IMR-90 (cell line): ENCODE measurements at regions of chr11 and their contacts with region 1.

Region 1: GRCh38 chr11:58254936-58255335 is 13.1 kb downstream of the OR10W1 start:
- DNase-seq: peak; percentile 18
- ATAC-seq: no peak; the same call in 1 of the 2 replicates
- H3K4me3 ChIP-seq: no peak overlapping the region
- H3K27ac ChIP-seq: no peak overlapping the region
- H3K4me1 ChIP-seq: no peaks in the 10 kb centered on the region
- H3K27me3 ChIP-seq: no peaks in the 10 kb centered on the region
- CTCF ChIP-seq: no peak
- POLR2A ChIP-seq: no peak
- RAD21 ChIP-seq: no peak

Region 2: GRCh38 chr11:57964660-57965059 is 290.3 kb before region 1 on chr11:
- CTCF ChIA-PET with region 1: no interaction called
- POLR2A ChIA-PET with region 1: no interaction called
- dilution Hi-C with region 1: no loop called
- in situ Hi-C with region 1: no loop called
- intact Hi-C with region 1: no loop called
- DNase-seq: no peak
- ATAC-seq: no peak
- H3K4me3 ChIP-seq: no peak overlapping the region
- H3K27ac ChIP-seq: no peak overlapping the region
- H3K4me1 ChIP-seq: no peaks in the 10 kb centered on the region
- H3K27me3 ChIP-seq: peaks cover 14% of the 10 kb centered on the region
- CTCF ChIP-seq: no peak
- POLR2A ChIP-seq: no peak
- RAD21 ChIP-seq: no peak

Region 3: GRCh38 chr11:58222721-58223120 is 32.2 kb before region 1 on chr11:
- CTCF ChIA-PET with region 1: no interaction called
- POLR2A ChIA-PET with region 1: interaction called, 13 read pairs
- dilution Hi-C with region 1: no loop called
- in situ Hi-C with region 1: no loop called
- intact Hi-C with region 1: no loop called
- DNase-seq: peak; percentile 41
- ATAC-seq: peak; percentile 42
- H3K4me3 ChIP-seq: no peak overlapping the region
- H3K27ac ChIP-seq: no peak overlapping the region
- H3K4me1 ChIP-seq: no peaks in the 10 kb centered on the region
- H3K27me3 ChIP-seq: no peaks in the 10 kb centered on the region
- CTCF ChIP-seq: no peak
- POLR2A ChIP-seq: no peak
- RAD21 ChIP-seq: no peak

Region 4: DNA sequence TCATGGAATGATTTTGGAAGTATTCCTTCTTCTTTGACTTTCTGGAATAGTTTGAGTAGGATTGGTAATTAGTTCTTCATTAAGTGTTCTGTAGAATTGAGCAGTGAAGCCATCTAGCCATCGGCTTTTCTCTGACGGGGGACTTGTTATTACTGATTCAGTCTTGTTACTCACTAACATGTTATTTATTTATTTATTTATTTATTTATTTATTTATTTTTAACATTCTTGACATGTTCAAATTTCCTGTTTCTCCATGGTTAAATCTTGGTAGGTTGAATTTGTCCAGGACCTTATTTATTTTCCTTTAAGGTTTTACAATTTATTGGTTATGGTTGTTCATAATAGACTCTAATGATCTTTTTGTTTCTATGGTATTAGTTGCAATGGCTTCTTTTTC is 11.0 kb before region 1 on chr11:
- CTCF ChIA-PET with region 1: no interaction called
- POLR2A ChIA-PET with region 1: interaction called, 10 read pairs
- dilution Hi-C with region 1: no loop called
- in situ Hi-C with region 1: no loop called
- intact Hi-C with region 1: no loop called
- DNase-seq: no peak
- ATAC-seq: no peak
- H3K4me3 ChIP-seq: no peak overlapping the region
- H3K27ac ChIP-seq: no peak overlapping the region
- H3K4me1 ChIP-seq: no peaks in the 10 kb centered on the region
- H3K27me3 ChIP-seq: no peaks in the 10 kb centered on the region
- CTCF ChIP-seq: no peak
- POLR2A ChIP-seq: no peak
- RAD21 ChIP-seq: no peak